Calu3 (cell line): ENCODE measurements at regions of chr12 and their contacts with region 1.

Region 1: GRCh38 chr12:8890313-8891085 is 23.8 kb upstream of the PHC1 start:
- DNase-seq: peak; percentile 66
- H3K4me3 Mint-ChIP-seq: peak overlapping the region; percentile 74
- H3K27ac Mint-ChIP-seq: no peak overlapping the region
- H3K4me1 Mint-ChIP-seq: no peaks in the 10 kb centered on the region
- H3K27me3 Mint-ChIP-seq: no peaks in the 10 kb centered on the region
- CTCF ChIP-seq: peak; percentile 70

Region 2: DNA sequence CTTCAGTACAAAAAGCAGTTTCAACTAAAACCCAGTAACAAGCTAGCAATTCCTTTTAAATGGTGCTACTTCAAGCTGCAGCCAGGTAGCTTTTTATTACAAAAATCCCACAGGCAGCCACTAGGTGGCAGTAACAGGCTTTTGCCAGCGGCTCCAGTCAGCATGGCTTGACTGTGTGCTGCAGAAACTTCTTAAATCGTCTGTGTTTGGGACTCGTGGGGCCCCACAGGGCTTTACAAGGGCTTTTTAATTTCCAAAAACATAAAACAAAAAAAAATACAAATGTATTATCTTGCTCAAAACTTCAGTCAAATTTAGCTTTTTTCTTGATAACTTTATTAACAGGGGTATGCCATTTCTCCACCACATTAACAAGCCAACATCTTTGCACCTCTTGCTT is 346.2 kb before region 1 on chr12:
- CTCF ChIA-PET with region 1: no interaction called
- intact Hi-C with region 1: loop called (anchors 10 kb)
- DNase-seq: peak; percentile 76
- H3K4me3 Mint-ChIP-seq: no peak overlapping the region
- H3K27ac Mint-ChIP-seq: no peak overlapping the region
- H3K4me1 Mint-ChIP-seq: peaks cover 10% of the 10 kb centered on the region
- H3K27me3 Mint-ChIP-seq: peaks cover 30% of the 10 kb centered on the region
- CTCF ChIP-seq: peak; percentile 83

Region 3: DNA sequence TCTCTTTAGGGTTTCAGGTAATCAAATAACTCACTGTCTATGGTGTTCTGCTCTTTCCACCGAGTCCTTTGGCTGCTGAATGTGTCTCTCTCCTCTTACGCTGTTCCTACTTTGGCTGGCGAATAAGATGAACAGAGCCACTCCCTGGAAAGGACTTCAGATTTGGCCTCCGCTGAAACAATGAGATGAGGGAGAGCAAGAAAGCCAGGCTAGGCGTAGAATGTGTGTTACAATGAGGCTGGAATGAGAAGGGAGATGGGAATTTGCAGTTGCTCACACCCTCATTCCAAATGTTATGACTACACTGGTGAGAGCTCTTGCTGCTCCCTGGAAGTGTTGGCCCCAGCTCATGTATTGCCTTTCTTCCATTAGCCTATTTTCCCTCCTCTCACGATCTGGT is 227.9 kb before region 1 on chr12 and contains the start of gene MFAP5:
- CTCF ChIA-PET with region 1: interaction called, 25 read pairs
- intact Hi-C with region 1: loop called (anchors 1 kb)
- DNase-seq: no peak
- H3K4me3 Mint-ChIP-seq: no peak within 1 kb of the TSS
- H3K27ac Mint-ChIP-seq: no peak within 1 kb of the TSS
- H3K4me1 Mint-ChIP-seq: no peaks in the 10 kb centered on the region
- H3K27me3 Mint-ChIP-seq: peaks cover 13% of the 10 kb centered on the region
- CTCF ChIP-seq: no peak
- total RNA-seq, gene MFAP5: not detected in 2 replicates

Region 4: DNA sequence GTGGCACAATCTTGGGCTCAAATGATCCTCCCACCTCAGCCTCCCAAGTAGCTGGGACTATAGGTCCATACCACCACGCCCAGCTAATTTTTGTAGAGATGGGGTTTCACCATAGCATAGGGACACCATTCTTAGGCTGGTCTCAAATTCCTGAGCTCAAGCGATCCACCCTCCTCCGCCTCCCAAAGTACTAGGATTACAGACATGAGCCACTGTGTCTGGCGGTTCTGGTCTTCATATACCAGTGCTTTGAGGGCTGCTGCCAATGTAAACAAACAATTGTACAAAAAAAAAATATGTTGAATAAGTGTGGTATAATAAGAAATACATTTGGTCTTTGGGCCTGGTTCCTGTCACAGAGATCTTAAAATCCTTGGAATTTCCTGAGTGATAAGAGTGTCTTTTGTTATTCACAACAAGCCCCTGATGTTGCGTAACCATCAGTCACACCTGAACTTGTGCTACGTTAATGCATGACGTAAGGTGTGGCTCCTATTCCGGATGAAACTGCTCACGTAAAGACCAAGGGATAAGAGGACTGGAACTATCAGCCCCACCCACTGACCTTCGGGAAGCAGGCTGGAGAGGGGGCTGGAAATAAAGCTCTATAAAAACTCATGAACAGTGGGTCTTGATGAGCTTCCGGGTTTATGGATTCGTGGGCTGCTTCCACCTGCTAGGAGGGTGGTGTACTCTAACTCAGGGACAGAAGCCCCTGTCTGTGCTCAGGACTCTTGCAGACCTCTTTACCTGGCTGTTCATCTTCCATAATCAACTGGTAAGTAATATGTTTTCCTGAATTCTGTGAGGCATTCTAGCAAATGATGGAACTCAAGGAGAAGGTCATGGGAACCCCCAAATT is 209.2 kb before region 1 on chr12:
- CTCF ChIA-PET with region 1: interaction called, 20 read pairs
- intact Hi-C with region 1: loop called (anchors 1 kb)
- DNase-seq: peak; percentile 58
- H3K4me3 Mint-ChIP-seq: peak overlapping the region; percentile 71
- H3K27ac Mint-ChIP-seq: peak overlapping the region; percentile 78
- H3K4me1 Mint-ChIP-seq: peaks cover 11% of the 10 kb centered on the region
- H3K27me3 Mint-ChIP-seq: no peaks in the 10 kb centered on the region
- CTCF ChIP-seq: no peak

Region 5: DNA sequence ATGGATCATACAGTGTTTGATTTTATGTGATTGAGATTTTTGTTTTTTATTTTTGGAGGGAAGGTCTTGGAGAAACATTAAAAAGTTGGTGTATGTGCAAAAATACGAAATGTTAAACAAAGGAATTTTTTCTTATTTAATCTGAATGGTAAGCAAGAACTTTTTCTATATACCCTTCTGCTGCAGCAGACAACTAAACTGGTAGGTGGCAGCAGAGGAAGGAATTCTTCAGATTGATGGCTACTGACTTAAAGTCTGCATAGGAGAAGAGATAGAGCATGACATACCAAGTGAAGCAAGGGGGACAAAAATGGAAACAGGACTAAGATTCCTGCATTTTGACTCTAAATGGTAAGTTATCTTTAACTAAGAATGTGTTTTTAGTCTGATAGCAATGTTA is 110.1 kb before region 1 on chr12:
- CTCF ChIA-PET with region 1: interaction called, 4 read pairs
- intact Hi-C with region 1: loop called (anchors 2 kb)
- DNase-seq: peak; percentile 10
- H3K4me3 Mint-ChIP-seq: no peak overlapping the region
- H3K27ac Mint-ChIP-seq: no peak overlapping the region
- H3K4me1 Mint-ChIP-seq: no peaks in the 10 kb centered on the region
- H3K27me3 Mint-ChIP-seq: no peaks in the 10 kb centered on the region
- CTCF ChIP-seq: no peak

Region 6: DNA sequence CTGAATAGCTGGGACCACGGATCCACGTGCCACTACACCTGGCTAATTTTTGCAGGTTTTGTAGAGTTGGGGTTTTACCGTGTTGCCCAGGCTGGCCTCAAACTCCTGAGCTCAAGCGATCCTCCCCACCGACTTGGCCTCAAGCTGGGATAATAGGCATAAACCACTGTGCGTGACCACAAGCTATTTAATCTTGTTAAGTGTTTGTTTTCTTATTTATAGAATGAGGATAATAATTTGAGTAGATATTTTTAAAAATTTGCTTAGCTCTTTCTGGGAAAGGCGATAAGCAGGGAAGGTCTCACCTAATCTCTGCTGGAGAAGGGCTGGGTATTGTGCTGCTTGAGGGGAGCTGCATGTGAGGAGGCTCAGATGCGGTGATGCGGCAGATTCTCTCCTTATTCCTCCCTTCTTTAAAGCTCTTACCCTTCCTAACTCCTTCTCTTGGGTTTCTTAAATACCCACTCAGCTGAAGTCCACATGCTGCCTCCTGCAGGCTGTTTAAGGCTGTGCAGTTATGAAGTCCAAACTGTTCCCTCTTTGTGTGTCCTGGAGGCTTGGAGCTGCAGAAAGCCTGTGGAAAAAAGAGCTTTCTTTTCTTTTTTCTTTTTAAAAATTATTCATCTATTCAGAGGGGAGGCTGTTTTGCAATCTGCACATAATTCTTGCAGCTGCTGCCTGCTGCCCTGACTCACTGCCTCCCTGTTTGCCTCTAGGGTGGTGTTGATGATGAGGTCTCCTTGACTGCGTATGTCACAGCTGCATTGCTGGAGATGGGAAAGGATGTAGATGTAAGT is 30.1 kb before region 1 on chr12:
- CTCF ChIA-PET with region 1: interaction called, 15 read pairs
- intact Hi-C with region 1: no loop called
- DNase-seq: peak; percentile 38
- H3K4me3 Mint-ChIP-seq: no peak overlapping the region
- H3K27ac Mint-ChIP-seq: no peak overlapping the region
- H3K4me1 Mint-ChIP-seq: no peaks in the 10 kb centered on the region
- H3K27me3 Mint-ChIP-seq: no peaks in the 10 kb centered on the region
- CTCF ChIP-seq: no peak

Region 7: GRCh38 chr12:9273276-9273675 is 382.8 kb after region 1 on chr12:
- CTCF ChIA-PET with region 1: no interaction called
- intact Hi-C with region 1: no loop called
- DNase-seq: no peak
- H3K4me3 Mint-ChIP-seq: no peak overlapping the region
- H3K27ac Mint-ChIP-seq: no peak overlapping the region
- H3K4me1 Mint-ChIP-seq: no peaks in the 10 kb centered on the region
- H3K27me3 Mint-ChIP-seq: peaks cover 14% of the 10 kb centered on the region
- CTCF ChIP-seq: no peak